ENCODE measurements at regions of chr13 and their contacts with region 1.

Region 1: GRCh38 chr13:74062933-74063332 is 71.3 kb downstream of the KLF12 start:
- DNase-seq: no peak
- H3K4me3 Mint-ChIP-seq: peak overlapping the region; percentile 40
- H3K27ac Mint-ChIP-seq: peak overlapping the region; percentile 86
- H3K4me1 Mint-ChIP-seq: peaks cover 80% of the 10 kb centered on the region
- H3K27me3 Mint-ChIP-seq: no peaks in the 10 kb centered on the region

Region 2: DNA sequence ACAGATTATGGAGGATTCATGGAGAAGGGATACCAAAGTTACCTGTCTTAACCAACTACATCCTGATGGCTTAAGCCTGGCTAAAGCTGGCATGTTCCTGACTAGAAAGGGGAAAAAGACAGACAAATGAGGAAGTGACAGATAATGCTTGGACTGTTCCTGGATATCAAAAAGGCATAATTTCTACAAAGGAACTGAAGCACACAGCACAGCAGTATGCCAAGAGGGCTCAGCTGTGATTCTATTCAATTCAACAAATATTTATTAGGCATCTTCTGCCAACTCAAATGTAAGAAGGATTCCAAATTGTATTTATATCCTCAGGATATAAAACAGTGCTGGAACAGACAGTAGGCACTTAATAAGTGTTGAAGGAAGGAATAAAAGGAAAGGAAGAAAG is 11.8 kb after region 1 on chr13:
- CTCF ChIA-PET with region 1: interaction called, 10 read pairs
- POLR2A ChIA-PET with region 1: no interaction called
- DNase-seq: no peak
- H3K4me3 Mint-ChIP-seq: no peak overlapping the region
- H3K27ac Mint-ChIP-seq: no peak overlapping the region
- H3K4me1 Mint-ChIP-seq: peaks cover 38% of the 10 kb centered on the region
- H3K27me3 Mint-ChIP-seq: no peaks in the 10 kb centered on the region

Region 3: DNA sequence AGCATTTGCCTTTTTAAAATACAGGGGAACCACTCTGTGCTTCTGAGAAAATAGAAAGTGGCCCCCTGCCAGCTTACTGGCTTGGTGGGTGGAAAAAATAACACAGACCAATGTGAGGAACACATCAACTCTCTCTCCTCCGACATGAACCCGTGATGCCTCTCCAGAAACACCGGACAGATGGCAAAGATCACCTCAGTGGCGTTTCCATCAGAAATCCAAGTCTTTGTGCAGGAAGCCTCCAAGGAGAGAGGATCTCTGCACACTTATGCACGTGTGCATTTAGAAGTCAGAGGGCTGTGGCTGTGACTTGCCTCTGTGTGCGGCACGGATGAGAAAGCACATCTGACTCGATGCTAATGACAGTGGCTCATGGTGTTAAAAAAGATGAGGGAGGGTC is 183.6 kb after region 1 on chr13:
- CTCF ChIA-PET with region 1: no interaction called
- POLR2A ChIA-PET with region 1: no interaction called
- DNase-seq: no peak
- H3K4me3 Mint-ChIP-seq: no peak overlapping the region
- H3K27ac Mint-ChIP-seq: no peak overlapping the region
- H3K4me1 Mint-ChIP-seq: peaks cover 62% of the 10 kb centered on the region
- H3K27me3 Mint-ChIP-seq: no peaks in the 10 kb centered on the region

Measured in activated CD4-positive, alpha-beta T cell treated with anti-CD3 and anti-CD28 coated beads, Interleukin-2, amount 10 ng/mL, durations not matched to agents 7 days and 5 days (primary cell).